ENCODE measurements at regions of chr17 and their contacts with region 1.

Region 1: DNA sequence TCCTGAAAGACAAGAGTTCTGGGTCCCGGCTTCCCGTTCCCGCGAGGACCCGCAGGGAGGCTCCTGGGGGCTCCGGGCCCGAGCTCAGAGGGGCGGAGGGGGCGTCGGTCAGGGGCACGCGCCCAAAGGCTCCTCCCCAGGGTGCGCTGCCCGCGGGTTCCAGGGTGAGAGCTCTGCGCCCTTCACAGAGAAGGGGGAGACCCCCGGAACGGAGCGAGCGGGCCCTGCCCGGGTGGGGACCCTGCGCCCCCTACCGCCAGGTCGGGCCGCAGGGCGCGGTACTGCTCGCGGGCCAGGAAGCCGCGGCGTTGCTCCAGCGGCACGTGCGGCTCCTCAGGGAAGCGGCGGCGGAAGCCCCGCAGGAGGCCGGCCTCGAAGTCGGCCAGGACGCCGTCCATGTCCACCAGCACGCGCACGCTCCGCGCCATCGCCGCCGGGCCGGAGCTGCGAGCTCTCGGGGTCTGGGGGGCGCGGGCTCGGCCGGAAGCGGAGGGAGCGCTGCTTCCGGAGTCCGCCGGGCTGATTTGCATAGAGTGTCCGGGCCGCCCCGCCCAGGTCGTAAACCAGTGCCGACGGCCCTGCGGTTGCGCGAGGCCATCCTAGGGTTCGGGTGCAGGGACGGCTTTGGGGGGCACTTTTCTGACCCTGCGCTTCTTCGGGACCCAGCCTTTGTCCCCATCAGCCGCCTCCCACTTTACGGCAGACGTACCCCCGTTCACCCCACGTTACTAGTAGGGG is at the start of gene NT5C:
- DNase-seq: peak; percentile 71
- H3K4me3 Mint-ChIP-seq: peak within 1 kb of the TSS; percentile 85
- H3K27ac Mint-ChIP-seq: peak within 1 kb of the TSS; percentile 86
- H3K4me1 Mint-ChIP-seq: peaks cover 16% of the 10 kb centered on the region
- H3K27me3 Mint-ChIP-seq: no peaks in the 10 kb centered on the region
- total RNA-seq, gene NT5C: 49.7 to 55.2 TPM

Region 2: DNA sequence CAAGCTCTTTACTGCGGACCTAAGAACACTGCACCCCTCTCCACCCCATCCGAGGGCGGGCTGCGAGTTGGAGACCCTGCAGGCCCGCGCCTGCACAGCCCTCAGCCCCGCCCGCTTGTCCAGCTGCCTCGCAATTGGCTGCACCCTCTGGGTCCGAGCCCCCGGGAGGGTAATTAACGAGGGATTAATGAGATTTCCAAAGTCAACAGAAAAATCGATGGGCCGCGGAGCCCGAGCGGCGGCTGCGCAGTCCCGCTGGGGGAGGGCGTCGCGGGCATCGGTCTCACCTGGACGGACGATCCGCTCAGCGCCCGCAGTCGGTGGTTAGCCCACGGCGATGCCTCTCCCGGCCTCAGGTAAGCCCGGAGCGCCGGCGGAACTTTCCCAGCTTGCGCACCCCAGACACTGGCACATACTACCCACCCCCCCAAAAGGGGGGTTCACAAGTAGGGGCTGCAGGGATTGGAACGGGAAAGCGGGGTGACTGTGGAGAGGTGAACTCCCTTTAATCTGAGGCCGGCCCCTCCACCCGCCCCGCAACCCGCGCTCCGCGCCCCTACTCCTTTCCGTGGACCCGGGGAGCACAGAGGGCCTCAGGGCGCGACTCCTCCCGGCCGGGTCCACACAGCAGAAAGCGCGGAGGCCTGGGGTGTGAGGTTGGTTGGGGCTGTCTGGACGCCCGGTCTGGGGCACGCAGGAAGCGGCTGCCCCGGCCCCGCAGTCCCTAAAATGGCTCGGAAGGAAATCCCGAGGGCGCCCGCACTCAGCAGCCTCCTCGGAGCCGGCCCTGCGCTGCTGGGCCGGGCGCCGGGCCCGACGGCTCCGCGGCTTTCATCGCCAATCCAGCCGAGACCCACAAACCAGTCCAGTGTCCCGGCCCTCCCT is 195.6 kb before region 1 on chr17 and contains the start of gene OTOP3:
- CTCF ChIA-PET with region 1: no interaction called
- intact Hi-C with region 1: no loop called
- DNase-seq: no peak
- H3K4me3 Mint-ChIP-seq: no peak within 1 kb of the TSS
- H3K27ac Mint-ChIP-seq: no peak within 1 kb of the TSS
- H3K4me1 Mint-ChIP-seq: peaks cover 2% of the 10 kb centered on the region
- H3K27me3 Mint-ChIP-seq: peaks cover 33% of the 10 kb centered on the region
- total RNA-seq, gene OTOP3: not detected

Region 3: GRCh38 chr17:75059369-75060345 is 71.8 kb before region 1 on chr17:
- CTCF ChIA-PET with region 1: interaction called, 4 read pairs
- intact Hi-C with region 1: loop called (anchors 2 kb)
- DNase-seq: no peak
- H3K4me3 Mint-ChIP-seq: no peak overlapping the region
- H3K27ac Mint-ChIP-seq: no peak overlapping the region
- H3K4me1 Mint-ChIP-seq: peaks cover 19% of the 10 kb centered on the region
- H3K27me3 Mint-ChIP-seq: no peaks in the 10 kb centered on the region

Region 4: DNA sequence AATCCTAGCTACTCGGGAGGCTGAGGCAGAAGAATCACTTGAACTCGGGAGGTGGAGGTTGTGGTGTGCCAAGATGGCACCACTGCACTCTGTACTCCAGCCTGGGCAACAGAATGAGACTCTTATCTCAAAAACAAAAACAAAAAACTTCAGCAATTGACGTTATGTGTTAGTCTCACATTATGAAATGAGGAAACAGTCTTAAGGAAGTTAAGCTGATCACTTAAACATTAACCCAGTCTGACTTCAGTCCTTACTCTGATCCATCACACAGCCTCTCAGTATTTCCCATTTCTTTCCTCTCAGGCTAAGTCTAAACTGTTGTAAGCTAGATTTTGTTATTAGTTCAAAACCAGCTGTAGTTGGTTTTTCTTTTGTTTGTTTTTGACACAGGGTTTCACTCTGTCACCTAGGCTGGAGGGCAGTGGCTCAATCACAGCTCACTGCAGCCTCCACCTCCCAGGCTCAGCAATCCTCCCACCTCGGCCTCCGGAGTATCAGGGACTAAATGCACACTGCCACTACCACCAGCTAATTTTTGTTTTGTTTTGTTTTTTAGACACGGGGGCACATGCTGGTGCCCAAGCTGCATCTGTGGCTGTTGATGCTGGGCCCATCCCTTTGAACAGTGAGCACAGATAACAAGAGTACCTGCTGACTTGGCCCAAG is 16.6 kb after region 1 on chr17:
- CTCF ChIA-PET with region 1: interaction called, 13 read pairs
- intact Hi-C with region 1: no loop called
- DNase-seq: no peak
- H3K4me3 Mint-ChIP-seq: no peak overlapping the region
- H3K27ac Mint-ChIP-seq: no peak overlapping the region
- H3K4me1 Mint-ChIP-seq: peaks cover 19% of the 10 kb centered on the region
- H3K27me3 Mint-ChIP-seq: no peaks in the 10 kb centered on the region